ENCODE measurements at regions of chrX and their contacts with region 1.

Region 1: GRCh38 chrX:18984381-18985185 is 669 bp upstream of the PHKA2 start:
- DNase-seq: peak; percentile 78 to 92 (median 84)
- ATAC-seq: peak; percentile 85
- H3K4me3 ChIP-seq: peak overlapping the region; percentile 78
- H3K4me3 Mint-ChIP-seq: peak overlapping the region; percentile 92
- H3K27ac ChIP-seq: peak overlapping the region; percentile 83 to 94
- H3K27ac Mint-ChIP-seq: peak overlapping the region; percentile 91
- H3K4me1 ChIP-seq: peaks cover 19% of the 10 kb centered on the region
- H3K4me1 Mint-ChIP-seq: peaks cover 21% of the 10 kb centered on the region
- H3K27me3 ChIP-seq: no peaks in the 10 kb centered on the region
- H3K27me3 Mint-ChIP-seq: no peaks in the 10 kb centered on the region
- CTCF ChIP-seq: peak; percentile 26

Region 2: GRCh38 chrX:18886344-18887161 is 98.0 kb before region 1 on chrX:
- CTCF ChIA-PET with region 1: no interaction called
- POLR2A ChIA-PET with region 1: interaction called, 6 read pairs
- intact Hi-C with region 1: loop called in 1 of 2 experiments (anchors 5 kb)
- DNase-seq: peak in 12 of 14 experiments; percentile 13 to 68 (median 29)
- ATAC-seq: peak; percentile 60
- H3K4me3 ChIP-seq: peak overlapping the region; percentile 61
- H3K4me3 Mint-ChIP-seq: peak overlapping the region; percentile 87
- H3K27ac ChIP-seq: peak overlapping the region; percentile 29 to 63
- H3K27ac Mint-ChIP-seq: peak overlapping the region; percentile 79
- H3K4me1 ChIP-seq: peaks cover 35% of the 10 kb centered on the region
- H3K4me1 Mint-ChIP-seq: peaks cover 40% of the 10 kb centered on the region
- H3K27me3 ChIP-seq: no peaks in the 10 kb centered on the region
- H3K27me3 Mint-ChIP-seq: no peaks in the 10 kb centered on the region
- CTCF ChIP-seq: peak; percentile 32

Region 3: DNA sequence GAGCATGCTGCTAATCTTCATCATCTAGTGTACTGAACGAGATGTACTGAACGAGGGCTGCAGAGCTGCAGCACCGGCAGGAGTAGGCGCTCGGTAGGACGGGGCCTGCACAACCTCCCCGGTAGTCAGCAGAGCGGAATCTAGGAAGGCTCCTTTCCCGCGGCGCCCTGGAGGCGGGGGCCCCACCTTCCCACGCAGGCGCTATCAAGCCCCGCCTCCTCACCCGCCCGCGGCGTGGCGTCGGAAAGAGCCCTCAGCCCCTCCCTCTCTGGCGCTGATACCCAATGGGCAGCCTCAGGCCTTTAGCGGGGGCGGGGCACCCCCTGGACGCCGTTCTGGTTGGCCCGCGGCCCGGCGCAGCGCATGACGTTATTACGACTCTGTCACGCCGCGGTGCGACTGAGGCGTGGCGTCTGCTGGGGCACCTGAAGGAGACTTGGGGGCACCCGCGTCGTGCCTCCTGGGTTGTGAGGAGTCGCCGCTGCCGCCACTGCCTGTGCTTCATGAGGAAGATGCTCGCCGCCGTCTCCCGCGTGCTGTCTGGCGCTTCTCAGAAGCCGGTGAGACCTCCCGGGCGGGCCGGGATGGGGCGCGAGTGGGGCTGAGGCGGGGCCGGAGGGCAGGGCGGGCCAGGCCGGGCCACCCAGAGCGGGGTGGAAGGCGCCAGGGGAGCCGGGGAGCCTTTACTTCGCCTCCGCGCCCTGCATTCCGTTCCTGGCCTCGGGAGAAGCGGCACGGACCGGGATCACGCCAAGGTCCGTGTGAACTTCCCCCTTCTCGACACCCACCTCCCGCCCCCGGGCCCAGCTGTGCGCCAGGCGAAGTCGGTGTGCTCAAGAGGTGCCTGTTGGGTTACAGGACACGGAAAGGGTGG is 359.2 kb after region 1 on chrX and contains the start of gene PDHA1:
- CTCF ChIA-PET with region 1: no interaction called
- POLR2A ChIA-PET with region 1: no interaction called
- intact Hi-C with region 1: loop called in 1 of 2 experiments (anchors 2 kb)
- DNase-seq: peak; percentile 82 to 96 (median 90)
- ATAC-seq: peak; percentile 96
- H3K4me3 ChIP-seq: peak within 1 kb of the TSS; percentile 74
- H3K4me3 Mint-ChIP-seq: peak within 1 kb of the TSS; percentile 90
- H3K27ac ChIP-seq: peak within 1 kb of the TSS; percentile 56 to 60
- H3K27ac Mint-ChIP-seq: peak within 1 kb of the TSS; percentile 90
- H3K4me1 ChIP-seq: peaks cover 27% of the 10 kb centered on the region
- H3K4me1 Mint-ChIP-seq: peaks cover 19% of the 10 kb centered on the region
- H3K27me3 ChIP-seq: no peaks in the 10 kb centered on the region
- H3K27me3 Mint-ChIP-seq: no peaks in the 10 kb centered on the region
- CTCF ChIP-seq: no peak
- total RNA-seq, gene PDHA1: 95.8 to 99.0 TPM

Region 4: GRCh38 chrX:19514791-19515614 is 530.4 kb after region 1 on chrX and contains the start of gene MAP3K15:
- CTCF ChIA-PET with region 1: no interaction called
- POLR2A ChIA-PET with region 1: no interaction called
- intact Hi-C with region 1: no loop called
- DNase-seq: peak in 4 of 14 experiments; percentile 3 to 27 (median 18)
- ATAC-seq: no peak
- H3K4me3 ChIP-seq: peak within 1 kb of the TSS; percentile 34
- H3K4me3 Mint-ChIP-seq: peak within 1 kb of the TSS; percentile 30
- H3K27ac ChIP-seq: no peak within 1 kb of the TSS
- H3K27ac Mint-ChIP-seq: no peak within 1 kb of the TSS
- H3K4me1 ChIP-seq: peaks cover 6% of the 10 kb centered on the region
- H3K4me1 Mint-ChIP-seq: peaks cover 7% of the 10 kb centered on the region
- H3K27me3 ChIP-seq: peaks cover 6% of the 10 kb centered on the region in 2 experiments
- H3K27me3 Mint-ChIP-seq: peaks cover 35% of the 10 kb centered on the region
- CTCF ChIP-seq: no peak
- total RNA-seq, gene MAP3K15: 0.14 TPM in 1 of 2 experiments, not detected in the other

Measured in CD4-positive, alpha-beta T cell (primary cell).